PC-9 (cell line): ENCODE measurements at regions of chr11 and their contacts with region 1.

Region 1: GRCh38 chr11:7904914-7905313 is 26.2 kb downstream of the OR10A6 start:
- DNase-seq: no peak
- H3K4me3 ChIP-seq: peak overlapping the region; percentile 73
- H3K27ac ChIP-seq: peak overlapping the region; percentile 97
- H3K4me1 ChIP-seq: peaks cover 89% of the 10 kb centered on the region
- H3K27me3 ChIP-seq: no peaks in the 10 kb centered on the region
- CTCF ChIP-seq: peak; percentile 45; the same call in 1 of the 2 replicates

Region 2: GRCh38 chr11:7605186-7605943 is 299.5 kb before region 1 on chr11:
- CTCF ChIA-PET with region 1: no interaction called
- POLR2A ChIA-PET with region 1: interaction called, 12 read pairs
- intact Hi-C with region 1: no loop called
- DNase-seq: peak; percentile 53 to 98
- H3K4me3 ChIP-seq: peak overlapping the region; percentile 25; the same call in 1 of the 2 replicates
- H3K27ac ChIP-seq: peak overlapping the region; percentile 94
- H3K4me1 ChIP-seq: peaks cover 62% of the 10 kb centered on the region
- H3K27me3 ChIP-seq: no peaks in the 10 kb centered on the region
- CTCF ChIP-seq: no peak

Region 3: DNA sequence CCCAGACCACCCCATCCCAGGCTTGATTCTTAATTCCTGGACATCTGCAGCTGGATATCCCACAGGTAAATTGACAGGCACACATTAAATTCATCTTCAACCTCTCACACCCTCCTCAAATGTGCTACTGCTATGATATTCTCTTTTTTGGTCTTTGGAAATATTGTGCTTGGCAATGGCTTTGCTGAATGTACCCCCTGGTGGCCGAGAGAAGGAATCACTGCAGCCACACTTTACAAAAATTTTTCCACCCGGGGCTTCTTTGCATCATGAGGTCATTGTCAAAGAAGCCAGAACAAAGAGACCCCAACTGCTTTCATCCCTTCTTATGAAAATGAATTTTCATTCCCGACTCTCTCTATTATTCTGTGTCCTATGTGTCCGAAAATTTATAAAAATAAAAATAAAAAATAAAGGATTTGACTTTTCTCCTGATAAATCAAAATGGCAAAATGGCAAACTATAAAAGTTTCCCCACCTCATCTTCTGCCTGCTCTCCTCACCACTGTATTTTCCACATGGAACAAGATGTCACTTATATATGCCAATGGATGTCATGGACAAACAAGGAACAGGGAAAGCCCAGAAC is 216.6 kb before region 1 on chr11:
- CTCF ChIA-PET with region 1: no interaction called
- POLR2A ChIA-PET with region 1: no interaction called
- intact Hi-C with region 1: no loop called
- DNase-seq: no peak
- H3K4me3 ChIP-seq: no peak overlapping the region
- H3K27ac ChIP-seq: no peak overlapping the region
- H3K4me1 ChIP-seq: no peaks in the 10 kb centered on the region
- H3K27me3 ChIP-seq: no peaks in the 10 kb centered on the region
- CTCF ChIP-seq: peak; percentile 76

Region 4: GRCh38 chr11:7977232-7977917 is 72.5 kb after region 1 on chr11:
- CTCF ChIA-PET with region 1: interaction called, 11 read pairs
- POLR2A ChIA-PET with region 1: interaction called, 6 read pairs
- intact Hi-C with region 1: loop called (anchors 1 kb)
- DNase-seq: peak; percentile 26 to 88
- H3K4me3 ChIP-seq: peak overlapping the region; percentile 35; the same call in 1 of the 2 replicates
- H3K27ac ChIP-seq: peak overlapping the region; percentile 91
- H3K4me1 ChIP-seq: peaks cover 39% of the 10 kb centered on the region
- H3K27me3 ChIP-seq: no peaks in the 10 kb centered on the region
- CTCF ChIP-seq: no peak

Region 5: GRCh38 chr11:7986768-7987559 is 82.0 kb after region 1 on chr11 and contains the start of gene EIF3F:
- CTCF ChIA-PET with region 1: interaction called, 25 read pairs
- POLR2A ChIA-PET with region 1: interaction called, 12 read pairs
- intact Hi-C with region 1: loop called (anchors 1 kb)
- DNase-seq: peak; percentile 84 to 97
- H3K4me3 ChIP-seq: peak within 1 kb of the TSS; percentile 91
- H3K27ac ChIP-seq: peak within 1 kb of the TSS; percentile 33; the same call in 1 of the 2 replicates
- H3K4me1 ChIP-seq: peaks cover 23% of the 10 kb centered on the region
- H3K27me3 ChIP-seq: no peaks in the 10 kb centered on the region
- CTCF ChIP-seq: peak; percentile 80
- total RNA-seq, gene EIF3F: 191 and 195 TPM in 2 replicates